CD8-positive, alpha-beta memory T cell (primary cell): ENCODE measurements at regions of chr21 and their contacts with region 1.

Region 1: GRCh38 chr21:42527489-42528158 is 14.0 kb downstream of the SLC37A1 start:
- DNase-seq: peak; percentile 19 to 84 (median 76)
- H3K4me3 ChIP-seq: peak overlapping the region; percentile 52
- H3K4me3 Mint-ChIP-seq: peak overlapping the region; percentile 71 to 90 (median 85)
- H3K27ac ChIP-seq: peak overlapping the region; percentile 52
- H3K27ac Mint-ChIP-seq: peak overlapping the region; percentile 92 to 99 (median 96)
- H3K4me1 ChIP-seq: peaks cover 32% of the 10 kb centered on the region
- H3K4me1 Mint-ChIP-seq: peaks cover 53 to 70% (median 55%) of the 10 kb centered on the region in 3 donors
- H3K27me3 ChIP-seq: no peaks in the 10 kb centered on the region
- H3K27me3 Mint-ChIP-seq: no peaks in the 10 kb centered on the region

Region 2: DNA sequence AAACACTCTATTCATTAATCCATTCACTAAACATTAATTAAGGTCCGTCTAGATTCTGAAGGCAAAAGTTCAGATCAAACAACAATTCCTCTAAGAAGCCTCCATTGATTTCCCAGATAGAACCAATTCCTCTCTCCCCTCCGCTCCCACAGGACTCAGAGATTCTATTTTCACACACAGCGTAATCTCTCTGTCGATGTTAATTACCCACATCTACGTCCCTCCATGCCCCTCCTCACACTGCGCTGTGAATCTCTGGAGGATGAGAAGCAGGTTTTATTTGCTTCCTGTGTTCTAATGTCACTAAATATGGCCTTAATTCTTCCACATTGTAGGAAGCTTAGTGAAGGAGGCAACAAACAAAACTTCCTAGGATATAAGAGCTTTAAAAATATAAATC is 1987.4 kb before region 1 on chr21:
- CTCF ChIA-PET with region 1: no interaction called
- POLR2A ChIA-PET with region 1: no interaction called
- DNase-seq: no peak
- H3K4me3 ChIP-seq: no peak overlapping the region
- H3K4me3 Mint-ChIP-seq: no peak overlapping the region
- H3K27ac ChIP-seq: no peak overlapping the region
- H3K27ac Mint-ChIP-seq: no peak overlapping the region
- H3K4me1 ChIP-seq: no peaks in the 10 kb centered on the region
- H3K4me1 Mint-ChIP-seq: no peaks in the 10 kb centered on the region
- H3K27me3 ChIP-seq: no peaks in the 10 kb centered on the region
- H3K27me3 Mint-ChIP-seq: no peaks in the 10 kb centered on the region

Region 3: DNA sequence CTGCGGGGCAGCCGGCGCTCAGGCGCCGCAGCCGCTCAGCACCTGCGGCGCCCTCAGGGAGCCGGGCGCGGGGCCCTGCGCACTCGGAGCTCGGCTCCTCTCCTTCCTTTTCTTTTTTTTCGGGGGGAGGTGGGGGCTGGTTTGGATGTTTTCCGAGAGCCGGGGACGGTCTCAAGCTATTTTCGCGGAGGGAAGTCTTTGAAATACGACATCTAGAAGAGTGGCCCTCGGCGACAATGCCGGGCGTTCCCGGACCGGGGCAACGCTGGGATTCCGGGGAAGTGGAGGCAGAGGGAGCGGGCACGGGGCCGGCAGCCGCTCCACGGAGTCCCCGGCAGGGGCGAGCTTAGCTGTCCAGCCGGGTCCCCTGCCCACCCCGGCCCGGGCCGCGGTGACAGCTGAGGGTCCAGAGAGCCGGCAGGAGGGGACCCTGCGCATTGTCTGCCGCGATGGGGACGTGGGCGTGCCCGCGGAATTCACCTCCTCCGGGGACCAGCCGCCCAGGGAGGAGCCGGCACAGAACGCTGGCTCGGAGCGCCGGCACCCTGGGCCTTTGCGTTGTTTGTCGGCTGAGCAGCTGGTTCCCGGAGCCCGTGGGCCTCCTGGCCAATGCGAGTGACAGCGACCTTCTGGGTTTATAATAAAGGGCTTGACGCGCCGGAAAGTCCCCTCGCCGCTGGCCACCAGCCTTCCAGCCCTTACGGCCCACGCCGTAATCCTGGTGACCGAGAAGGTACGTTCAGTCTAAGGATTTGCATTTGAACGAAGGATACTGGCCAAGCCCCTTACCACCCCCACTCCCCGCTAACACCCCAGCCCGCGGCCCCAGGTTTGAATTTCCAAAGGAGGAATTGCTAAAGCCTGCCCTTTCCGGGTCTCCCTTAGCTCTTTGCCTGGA is 13.4 kb before region 1 on chr21:
- CTCF ChIA-PET with region 1: interaction called, 6 read pairs
- POLR2A ChIA-PET with region 1: interaction called, 20 read pairs
- DNase-seq: peak; percentile 38 to 70 (median 45)
- H3K4me3 ChIP-seq: peak overlapping the region; percentile 47
- H3K4me3 Mint-ChIP-seq: peak overlapping the region; percentile 84 to 97 (median 89)
- H3K27ac ChIP-seq: peak overlapping the region; percentile 58
- H3K27ac Mint-ChIP-seq: peak overlapping the region; percentile 51 to 96 (median 88)
- H3K4me1 ChIP-seq: peaks cover 21% of the 10 kb centered on the region
- H3K4me1 Mint-ChIP-seq: peaks cover 24 to 58% (median 47%) of the 10 kb centered on the region in 3 donors
- H3K27me3 ChIP-seq: no peaks in the 10 kb centered on the region
- H3K27me3 Mint-ChIP-seq: no peaks in the 10 kb centered on the region

Region 4: GRCh38 chr21:42590431-42591131 is 63.0 kb after region 1 on chr21:
- CTCF ChIA-PET with region 1: no interaction called
- POLR2A ChIA-PET with region 1: no interaction called
- DNase-seq: peak in 1 of 5 donors; percentile 37
- H3K4me3 ChIP-seq: no peak overlapping the region
- H3K4me3 Mint-ChIP-seq: no peak overlapping the region
- H3K27ac ChIP-seq: no peak overlapping the region
- H3K27ac Mint-ChIP-seq: no peak overlapping the region
- H3K4me1 ChIP-seq: peaks cover 9% of the 10 kb centered on the region
- H3K4me1 Mint-ChIP-seq: peaks cover 0 to 5% (median 5%) of the 10 kb centered on the region in 3 donors
- H3K27me3 ChIP-seq: peaks cover 4% of the 10 kb centered on the region
- H3K27me3 Mint-ChIP-seq: peaks cover 5 to 6% of the 10 kb centered on the region in 2 donors